Left colon (tissue), 2 donors: ENCODE measurements at regions of chr1 and their contacts with region 1.

Region 1: DNA sequence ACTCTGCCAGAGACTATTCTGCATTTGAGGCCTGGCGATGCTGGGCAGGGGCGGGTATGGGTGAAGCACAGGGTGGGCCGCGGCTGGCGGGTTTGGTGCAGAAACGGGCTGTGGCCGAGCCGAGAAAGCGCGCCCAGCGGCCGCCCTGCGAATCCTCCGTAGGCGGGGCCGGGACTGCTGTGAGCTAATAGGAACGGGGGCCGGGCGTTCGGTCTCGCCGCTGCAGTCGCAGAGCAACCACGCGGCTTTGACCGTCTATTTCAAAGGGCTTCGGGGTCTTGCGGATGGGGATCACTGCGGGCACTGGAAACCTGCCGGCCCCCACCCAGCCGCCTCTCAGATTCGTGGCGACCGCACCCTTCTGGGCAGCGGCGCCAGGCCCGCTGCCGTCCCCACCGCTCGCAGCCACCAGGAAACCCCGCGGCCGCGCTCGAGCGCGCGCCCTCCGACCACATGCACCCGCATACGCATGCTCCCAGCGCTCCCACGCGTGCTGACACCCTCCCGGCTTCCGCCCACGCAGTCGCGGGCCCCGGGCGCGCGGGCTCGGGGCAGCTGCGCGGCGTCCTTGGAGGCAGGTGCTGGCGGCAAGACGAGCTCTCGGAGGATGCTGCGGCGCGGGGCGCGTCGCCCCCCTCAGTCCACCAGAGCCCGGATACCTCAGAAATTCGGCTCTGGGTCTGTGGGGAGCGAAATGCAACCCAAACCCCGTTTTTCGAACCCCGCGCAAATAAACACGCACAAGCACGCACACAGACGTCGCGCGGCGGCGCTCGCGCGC is 32.6 kb downstream of the DNTTIP2 start:
- DNase-seq: peak; percentile 88 to 95
- ATAC-seq: peak; percentile 70

Region 2: GRCh38 chr1:93447516-93448291 is 398.7 kb before region 1 on chr1 and contains the start of gene FNBP1L:
- intact Hi-C with region 1: loop called in 1 of 2 experiments (anchors 10 kb)
- DNase-seq: peak; percentile 79 to 85
- ATAC-seq: peak; percentile 77
- total RNA-seq, gene FNBP1L: 46.7 to 64.2 TPM

Region 3: GRCh38 chr1:93925206-93925605 is 78.8 kb after region 1 on chr1:
- intact Hi-C with region 1: no loop called
- DNase-seq: no peak
- ATAC-seq: no peak

Region 4: GRCh38 chr1:94063379-94063778 is 217.0 kb after region 1 on chr1:
- intact Hi-C with region 1: no loop called
- DNase-seq: peak; percentile 62 to 67
- ATAC-seq: peak; percentile 77